Activated CD4-positive, alpha-beta T cell treated with anti-CD3 and anti-CD28 coated beads, Interleukin-2, amount 10 ng/mL, durations not matched to agents 24 days and 14 days (primary cell): ENCODE measurements at regions of chr1 and their contacts with region 1.

Region 1: GRCh38 chr1:154747740-154748404 is 122.2 kb downstream of the KCNN3 start:
- DNase-seq: peak; percentile 91
- H3K4me3 Mint-ChIP-seq: peak overlapping the region; percentile 90
- H3K27ac Mint-ChIP-seq: peak overlapping the region; percentile 94
- H3K4me1 Mint-ChIP-seq: peaks cover 87% of the 10 kb centered on the region
- H3K27me3 Mint-ChIP-seq: peaks cover 2% of the 10 kb centered on the region

Region 2: GRCh38 chr1:154669464-154670282 is 78.2 kb before region 1 on chr1:
- intact Hi-C with region 1: loop called (anchors 1 kb)
- DNase-seq: peak; percentile 93
- H3K4me3 Mint-ChIP-seq: no peak overlapping the region
- H3K27ac Mint-ChIP-seq: peak overlapping the region; percentile 53
- H3K4me1 Mint-ChIP-seq: peaks cover 12% of the 10 kb centered on the region
- H3K27me3 Mint-ChIP-seq: peaks cover 3% of the 10 kb centered on the region

Region 3: GRCh38 chr1:154714638-154715037 is 33.2 kb before region 1 on chr1:
- intact Hi-C with region 1: loop called (anchors 5 kb)
- DNase-seq: no peak
- H3K4me3 Mint-ChIP-seq: no peak overlapping the region
- H3K27ac Mint-ChIP-seq: no peak overlapping the region
- H3K4me1 Mint-ChIP-seq: peaks cover 17% of the 10 kb centered on the region
- H3K27me3 Mint-ChIP-seq: peaks cover 5% of the 10 kb centered on the region

Region 4: GRCh38 chr1:154730259-154730658 is 17.6 kb before region 1 on chr1:
- intact Hi-C with region 1: loop called (anchors 2 kb)
- DNase-seq: no peak
- H3K4me3 Mint-ChIP-seq: no peak overlapping the region
- H3K27ac Mint-ChIP-seq: peak overlapping the region; percentile 29
- H3K4me1 Mint-ChIP-seq: peaks cover 49% of the 10 kb centered on the region
- H3K27me3 Mint-ChIP-seq: peaks cover 4% of the 10 kb centered on the region

Region 5: DNA sequence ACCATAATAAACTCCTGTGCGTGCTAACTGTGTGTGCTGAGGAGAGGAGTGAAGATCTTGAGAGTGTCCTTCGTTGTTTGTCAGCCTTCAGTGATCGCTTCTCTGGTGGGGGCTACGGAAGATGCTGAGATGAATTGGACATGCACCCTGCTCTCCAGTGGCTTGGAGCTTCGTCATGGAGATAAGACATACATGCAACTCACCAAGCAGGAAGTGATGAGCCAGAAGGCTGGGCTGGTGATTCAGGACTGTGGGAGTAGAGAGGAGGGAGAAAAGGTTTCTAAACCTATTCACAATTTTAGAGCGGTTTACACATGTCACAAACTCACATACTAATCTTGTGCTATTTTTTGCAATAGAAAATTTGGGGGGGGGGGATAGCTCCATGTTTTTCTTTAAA is 11.0 kb before region 1 on chr1:
- intact Hi-C with region 1: loop called (anchors 1 kb)
- DNase-seq: peak; percentile 75
- H3K4me3 Mint-ChIP-seq: peak overlapping the region; percentile 42
- H3K27ac Mint-ChIP-seq: peak overlapping the region; percentile 86
- H3K4me1 Mint-ChIP-seq: peaks cover 58% of the 10 kb centered on the region
- H3K27me3 Mint-ChIP-seq: peaks cover 4% of the 10 kb centered on the region

Region 6: GRCh38 chr1:154791292-154792166 is 43.7 kb after region 1 on chr1:
- intact Hi-C with region 1: loop called (anchors 1 kb)
- DNase-seq: peak; percentile 93
- H3K4me3 Mint-ChIP-seq: peak overlapping the region; percentile 63
- H3K27ac Mint-ChIP-seq: peak overlapping the region; percentile 81
- H3K4me1 Mint-ChIP-seq: peaks cover 28% of the 10 kb centered on the region
- H3K27me3 Mint-ChIP-seq: peaks cover 18% of the 10 kb centered on the region

Region 7: GRCh38 chr1:154870115-154870571 is 122.3 kb after region 1 on chr1 and contains the start of gene KCNN3:
- intact Hi-C with region 1: loop called (anchors 5 kb)
- DNase-seq: peak; percentile 95
- H3K4me3 Mint-ChIP-seq: peak within 1 kb of the TSS; percentile 53
- H3K27ac Mint-ChIP-seq: no peak within 1 kb of the TSS
- H3K4me1 Mint-ChIP-seq: peaks cover 41% of the 10 kb centered on the region
- H3K27me3 Mint-ChIP-seq: peaks cover 32% of the 10 kb centered on the region
- total RNA-seq, gene KCNN3: 0.35 and 0.54 TPM in 2 replicates

Region 8: GRCh38 chr1:155410931-155411330 is 663.1 kb after region 1 on chr1:
- intact Hi-C with region 1: no loop called
- DNase-seq: no peak
- H3K4me3 Mint-ChIP-seq: no peak overlapping the region
- H3K27ac Mint-ChIP-seq: peak overlapping the region; percentile 69
- H3K4me1 Mint-ChIP-seq: peaks cover 10% of the 10 kb centered on the region
- H3K27me3 Mint-ChIP-seq: no peaks in the 10 kb centered on the region